ENCODE measurements at regions of chr11 and their contacts with region 1.

Region 1: DNA sequence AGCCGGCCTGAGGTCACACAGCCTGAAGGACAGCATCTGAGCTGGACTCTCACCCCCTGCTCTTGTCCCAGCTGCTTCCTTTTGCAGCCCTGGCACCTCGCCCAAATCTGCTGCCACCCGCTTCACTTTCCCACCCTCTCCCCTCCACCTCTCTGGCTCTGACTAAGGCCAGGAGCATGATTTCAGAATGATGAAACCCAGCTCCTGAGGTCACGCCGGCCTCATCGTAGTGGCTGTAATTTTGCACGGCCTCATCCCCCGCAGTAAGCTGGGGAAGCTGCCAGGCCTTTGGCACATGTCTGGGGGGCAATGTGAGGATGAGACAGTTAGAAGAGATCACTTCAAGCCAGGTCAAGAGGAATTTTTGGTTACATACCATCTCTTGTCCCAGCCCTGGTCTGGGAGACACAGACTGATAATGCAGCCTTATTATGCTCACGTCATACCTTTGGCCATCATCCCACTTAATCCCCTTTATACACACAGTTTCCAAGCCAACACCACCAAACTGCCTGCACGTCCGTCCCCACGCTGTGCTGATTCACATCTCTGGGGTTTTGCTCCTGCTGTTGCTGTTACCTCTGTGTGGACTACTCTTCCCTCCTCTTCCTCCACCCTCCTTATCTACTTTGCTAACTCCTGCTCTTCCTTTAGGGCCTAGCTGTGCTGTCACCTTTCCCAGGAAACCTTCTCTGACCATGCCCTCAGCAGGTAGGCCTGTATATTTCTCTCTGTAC is 58.1 kb downstream of the CHRDL2 start:
- DNase-seq: peak; percentile 92 to 95
- ATAC-seq: peak; percentile 68
- H3K4me3 ChIP-seq: no peak overlapping the region
- H3K27ac ChIP-seq: peak overlapping the region in 1 of 2 donors; percentile 49
- H3K4me1 ChIP-seq: no peaks in the 10 kb centered on the region
- H3K27me3 ChIP-seq: no peaks in the 10 kb centered on the region

Region 2: GRCh38 chr11:74237541-74237940 is 435.6 kb before region 1 on chr11:
- intact Hi-C with region 1: no loop called
- DNase-seq: no peak
- ATAC-seq: no peak
- H3K4me3 ChIP-seq: no peak overlapping the region
- H3K27ac ChIP-seq: no peak overlapping the region
- H3K4me1 ChIP-seq: no peaks in the 10 kb centered on the region
- H3K27me3 ChIP-seq: no peaks in the 10 kb centered on the region

Region 3: DNA sequence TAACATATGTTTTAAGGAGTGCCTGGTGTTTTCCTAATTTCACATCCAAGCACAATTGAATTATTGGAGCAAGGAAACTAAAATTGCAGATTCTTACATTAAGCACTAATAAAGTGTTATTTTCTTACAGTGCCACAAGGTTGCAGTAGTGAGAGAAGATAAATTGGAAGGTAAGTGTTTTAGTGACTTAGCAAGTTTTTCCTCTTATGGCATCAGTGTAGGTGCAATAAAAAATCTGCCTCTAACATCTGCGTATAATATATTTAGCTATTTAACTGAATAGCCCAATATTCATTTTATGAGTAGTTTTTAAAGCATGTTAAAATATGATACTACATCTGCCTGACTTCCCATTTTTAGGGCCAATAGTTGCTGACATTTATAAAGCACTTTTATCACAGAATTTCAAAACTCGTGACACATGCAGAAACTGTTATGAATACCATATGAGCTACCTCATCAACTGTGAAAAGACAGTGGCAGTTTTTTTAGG is 61.7 kb before region 1 on chr11:
- intact Hi-C with region 1: loop called in 1 of 2 experiments (anchors 5 kb)
- DNase-seq: no peak
- ATAC-seq: no peak
- H3K4me3 ChIP-seq: no peak overlapping the region
- H3K27ac ChIP-seq: no peak overlapping the region
- H3K4me1 ChIP-seq: no peaks in the 10 kb centered on the region
- H3K27me3 ChIP-seq: no peaks in the 10 kb centered on the region

Region 4: GRCh38 chr11:74683279-74683871 is 10.3 kb after region 1 on chr11:
- intact Hi-C with region 1: loop called in 1 of 2 experiments (anchors 1 kb)
- DNase-seq: peak; percentile 63 to 86
- ATAC-seq: peak; percentile 37
- H3K4me3 ChIP-seq: peak overlapping the region; percentile 23 to 40
- H3K27ac ChIP-seq: no peak overlapping the region
- H3K4me1 ChIP-seq: no peaks in the 10 kb centered on the region
- H3K27me3 ChIP-seq: no peaks in the 10 kb centered on the region

Region 5: DNA sequence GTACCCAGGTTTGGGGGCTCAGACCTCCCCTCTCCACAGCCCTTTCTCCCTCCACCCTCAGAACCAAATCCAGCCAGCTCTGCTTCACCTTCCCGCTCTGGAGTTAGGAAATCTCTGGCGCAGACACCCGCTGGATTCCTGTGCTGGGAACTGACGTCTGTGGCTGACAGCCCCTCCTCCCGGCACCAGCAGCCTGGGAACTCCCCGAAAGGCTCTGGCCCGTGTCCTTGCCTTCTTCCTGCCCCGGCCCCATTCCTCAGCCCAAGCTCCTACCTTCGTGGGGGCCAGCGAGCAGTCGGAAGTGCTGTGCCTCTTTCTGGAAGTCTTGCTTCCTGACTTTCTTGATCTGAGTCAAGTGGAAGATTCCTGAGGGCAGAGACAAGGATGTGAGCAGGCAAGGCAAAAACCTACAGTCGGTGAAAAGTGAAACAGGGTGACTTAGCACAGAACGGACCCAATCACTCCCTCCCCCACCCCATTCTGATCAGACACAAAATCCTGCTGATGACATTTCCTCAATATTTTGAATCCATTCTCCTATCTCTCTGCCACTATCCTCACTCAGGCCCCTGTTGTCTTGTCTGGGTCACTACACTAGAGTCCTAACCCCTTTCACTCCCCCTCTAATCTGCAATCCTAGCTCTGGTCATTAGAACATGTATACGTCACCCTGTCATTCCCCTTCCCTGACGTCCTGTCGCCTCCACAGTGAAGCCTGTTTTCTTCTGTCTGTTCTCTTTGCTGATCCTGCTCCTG is 24.0 kb after region 1 on chr11:
- intact Hi-C with region 1: loop called in 1 of 2 experiments (anchors 1 kb)
- DNase-seq: peak; percentile 93 to 94
- ATAC-seq: peak; percentile 87
- H3K4me3 ChIP-seq: no peak overlapping the region
- H3K27ac ChIP-seq: peak overlapping the region; percentile 7 to 51
- H3K4me1 ChIP-seq: no peaks in the 10 kb centered on the region
- H3K27me3 ChIP-seq: no peaks in the 10 kb centered on the region